Aorta (tissue), 5 donors: ENCODE measurements at regions of chr1 and their contacts with region 1.

Region 1: GRCh38 chr1:33349778-33350610 is 29.1 kb upstream of the A3GALT2 start:
- DNase-seq: peak; percentile 92 to 94
- ATAC-seq: peak; percentile 93
- H3K4me3 ChIP-seq: peak overlapping the region; percentile 96 to 100
- H3K27ac ChIP-seq: peak overlapping the region; percentile 90 to 100
- H3K4me1 ChIP-seq: peaks cover 2 to 3% of the 10 kb centered on the region in 2 donors
- H3K27me3 ChIP-seq: no peaks in the 10 kb centered on the region

Region 2: DNA sequence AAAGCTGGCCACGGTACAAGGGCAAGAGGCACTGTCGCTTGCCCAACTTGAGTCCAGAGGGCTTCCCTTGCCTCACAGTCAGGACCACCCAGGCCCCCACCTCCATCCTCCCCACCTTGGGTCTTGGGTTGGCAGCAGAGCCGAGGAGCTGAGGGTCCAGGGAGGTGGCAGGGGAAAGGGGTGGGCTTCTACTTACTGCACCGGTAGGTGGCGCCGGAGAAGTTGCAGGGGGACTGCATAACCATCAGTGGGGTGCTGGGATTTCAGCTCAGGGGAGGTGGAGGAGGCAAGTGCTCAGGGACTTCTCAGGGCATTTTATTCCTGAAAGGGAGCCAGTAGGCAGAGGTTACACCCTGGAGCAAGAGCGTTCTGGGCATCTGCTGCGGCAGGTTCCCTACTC is 212.2 kb before region 1 on chr1:
- intact Hi-C with region 1: no loop called
- DNase-seq: no peak
- ATAC-seq: no peak
- H3K4me3 ChIP-seq: no peak overlapping the region
- H3K27ac ChIP-seq: no peak overlapping the region
- H3K4me1 ChIP-seq: no peaks in the 10 kb centered on the region
- H3K27me3 ChIP-seq: no peaks in the 10 kb centered on the region

Region 3: DNA sequence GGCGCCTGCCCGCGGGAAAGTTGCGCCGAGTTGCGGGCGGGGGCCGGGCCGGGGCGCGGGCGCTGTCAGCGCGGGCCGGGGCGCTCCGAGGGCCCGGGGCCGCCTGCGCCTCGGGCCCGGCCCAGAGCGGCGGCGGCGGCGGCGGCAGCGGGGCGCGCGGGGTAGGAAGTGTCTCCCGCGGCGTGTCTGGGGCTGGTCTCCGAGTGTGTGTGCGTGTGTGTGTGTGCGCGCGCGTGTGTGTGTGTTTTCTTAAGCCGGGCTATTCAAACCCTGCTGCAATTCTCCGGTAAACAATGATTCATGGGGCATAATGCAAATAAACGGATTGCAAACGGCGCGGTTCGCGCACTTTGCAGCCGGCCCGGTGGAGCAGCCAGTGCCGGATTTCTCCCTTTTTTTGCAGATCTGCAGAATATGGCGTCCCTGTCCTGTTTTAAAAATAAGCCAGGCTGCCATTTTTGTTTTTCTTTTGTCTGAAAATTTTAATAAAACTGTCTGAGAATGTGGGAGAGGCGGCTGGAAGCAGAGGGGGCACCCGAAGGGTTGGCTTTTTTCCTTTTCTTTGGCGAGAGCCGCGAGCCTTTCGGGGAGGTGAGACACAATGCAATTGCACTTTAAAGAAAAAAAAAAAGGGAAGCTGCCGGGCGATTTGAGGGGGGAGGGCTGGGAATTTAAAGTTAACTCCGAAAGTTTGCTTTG is 93.1 kb before region 1 on chr1:
- intact Hi-C with region 1: loop called in 1 of 2 experiments (anchors 5 kb)
- DNase-seq: peak; percentile 74 to 84
- ATAC-seq: peak; percentile 65
- H3K4me3 ChIP-seq: peak overlapping the region; percentile 92 to 99
- H3K27ac ChIP-seq: peak overlapping the region; percentile 95 to 99
- H3K4me1 ChIP-seq: peaks cover 0 to 2% of the 10 kb centered on the region in 2 donors
- H3K27me3 ChIP-seq: no peaks in the 10 kb centered on the region

Region 4: GRCh38 chr1:33319949-33320605 is 29.9 kb before region 1 on chr1:
- intact Hi-C with region 1: no loop called
- DNase-seq: peak; percentile 45 to 69
- ATAC-seq: no peak
- H3K4me3 ChIP-seq: no peak overlapping the region
- H3K27ac ChIP-seq: no peak overlapping the region
- H3K4me1 ChIP-seq: no peaks in the 10 kb centered on the region
- H3K27me3 ChIP-seq: no peaks in the 10 kb centered on the region

Region 5: DNA sequence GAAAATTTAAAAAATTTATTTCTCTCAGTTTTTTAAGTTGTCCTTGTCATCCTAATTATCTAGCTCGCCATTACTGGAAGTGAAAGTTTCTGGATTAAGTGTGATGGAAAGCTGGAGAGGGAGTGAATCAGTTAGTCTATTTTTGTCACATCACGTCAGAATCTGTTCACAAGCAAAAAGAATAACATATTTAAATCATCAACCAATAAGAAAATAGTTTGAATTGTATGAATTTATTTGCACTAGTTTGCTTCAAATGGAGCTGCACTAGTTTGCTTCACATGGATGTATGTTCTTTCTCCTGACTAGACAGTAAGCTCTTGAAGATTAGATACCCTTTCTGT is 58.1 kb after region 1 on chr1:
- intact Hi-C with region 1: loop called in 1 of 2 experiments (anchors 5 kb)
- DNase-seq: no peak
- ATAC-seq: no peak
- H3K4me3 ChIP-seq: peak overlapping the region in 1 of 2 donors; percentile 41
- H3K27ac ChIP-seq: no peak overlapping the region
- H3K4me1 ChIP-seq: no peaks in the 10 kb centered on the region
- H3K27me3 ChIP-seq: no peaks in the 10 kb centered on the region

Region 6: GRCh38 chr1:33460947-33461629 is 111.1 kb after region 1 on chr1:
- intact Hi-C with region 1: loop called in 1 of 2 experiments (anchors 5 kb)
- DNase-seq: peak; percentile 76
- ATAC-seq: no peak
- H3K4me3 ChIP-seq: no peak overlapping the region
- H3K27ac ChIP-seq: peak overlapping the region; percentile 88 to 91
- H3K4me1 ChIP-seq: peaks cover 3 to 4% of the 10 kb centered on the region in 2 donors
- H3K27me3 ChIP-seq: no peaks in the 10 kb centered on the region